ENCODE measurements at regions of chr13 and their contacts with region 1.

Region 1: GRCh38 chr13:46160471-46161066 is 21.4 kb downstream of the LCP1 start:
- DNase-seq: peak; percentile 85
- ATAC-seq: peak; percentile 66
- H3K4me3 ChIP-seq: no peak overlapping the region
- H3K4me3 Mint-ChIP-seq: peak overlapping the region; percentile 63
- H3K27ac ChIP-seq: peak overlapping the region; percentile 53 to 88
- H3K27ac Mint-ChIP-seq: peak overlapping the region; percentile 84
- H3K4me1 ChIP-seq: peaks cover 43 to 45% of the 10 kb centered on the region in 2 donors
- H3K4me1 Mint-ChIP-seq: peaks cover 50% of the 10 kb centered on the region
- H3K27me3 ChIP-seq: no peaks in the 10 kb centered on the region
- H3K27me3 Mint-ChIP-seq: no peaks in the 10 kb centered on the region
- CTCF ChIP-seq: peak; percentile 83

Region 2: DNA sequence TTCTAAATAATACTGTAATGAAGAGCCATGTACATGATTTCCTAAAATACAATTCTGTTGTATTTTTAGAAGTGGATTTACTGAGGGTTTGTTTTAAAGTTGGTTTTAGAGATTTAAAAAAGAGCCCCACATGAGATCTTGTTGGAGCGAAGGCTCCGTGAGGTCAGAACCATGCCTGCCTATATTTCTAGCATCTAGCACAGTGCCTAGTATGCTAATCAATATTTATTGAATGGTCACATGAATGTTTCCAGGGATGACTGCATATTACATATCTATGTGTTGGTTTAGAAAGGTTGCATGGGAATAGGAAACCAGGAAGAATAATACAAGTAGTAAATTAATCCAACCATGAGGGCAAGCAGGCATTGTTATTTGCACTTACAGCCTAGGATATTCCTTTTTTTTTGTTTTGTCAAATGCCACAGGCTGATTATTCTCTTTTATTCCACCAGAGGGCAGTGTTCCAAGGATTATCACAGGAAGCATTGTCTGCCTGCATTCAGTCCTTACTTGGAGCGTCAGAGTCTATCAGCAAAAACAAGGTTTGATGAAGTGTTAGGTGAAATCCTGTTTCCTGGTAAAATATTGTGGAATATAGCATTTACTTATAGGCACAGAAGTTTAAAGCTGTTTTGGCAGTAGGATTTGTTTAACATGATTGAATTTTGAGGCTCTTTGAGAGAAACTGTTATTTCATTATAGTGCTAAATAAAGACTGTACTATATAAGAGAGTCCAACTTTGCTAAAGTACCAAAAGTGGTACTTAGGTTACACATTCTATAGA is 649.1 kb before region 1 on chr13:
- CTCF ChIA-PET with region 1: no interaction called
- POLR2A ChIA-PET with region 1: interaction called, 13 read pairs
- intact Hi-C with region 1: no loop called
- DNase-seq: peak; percentile 73
- ATAC-seq: peak; percentile 65
- H3K4me3 ChIP-seq: no peak overlapping the region
- H3K4me3 Mint-ChIP-seq: no peak overlapping the region
- H3K27ac ChIP-seq: peak overlapping the region in 1 of 2 donors; percentile 26
- H3K27ac Mint-ChIP-seq: no peak overlapping the region
- H3K4me1 ChIP-seq: peaks cover 0 to 3% of the 10 kb centered on the region in 2 donors
- H3K4me1 Mint-ChIP-seq: peaks cover 8% of the 10 kb centered on the region
- H3K27me3 ChIP-seq: no peaks in the 10 kb centered on the region
- H3K27me3 Mint-ChIP-seq: no peaks in the 10 kb centered on the region
- CTCF ChIP-seq: peak; percentile 95

Region 3: GRCh38 chr13:46140044-46140443 is 20.5 kb before region 1 on chr13:
- CTCF ChIA-PET with region 1: interaction called, 25 read pairs
- POLR2A ChIA-PET with region 1: no interaction called
- intact Hi-C with region 1: no loop called
- DNase-seq: no peak
- ATAC-seq: no peak
- H3K4me3 ChIP-seq: no peak overlapping the region
- H3K4me3 Mint-ChIP-seq: no peak overlapping the region
- H3K27ac ChIP-seq: peak overlapping the region in 1 of 2 donors; percentile 64
- H3K27ac Mint-ChIP-seq: peak overlapping the region; percentile 7
- H3K4me1 ChIP-seq: no peaks in the 10 kb centered on the region
- H3K4me1 Mint-ChIP-seq: no peaks in the 10 kb centered on the region
- H3K27me3 ChIP-seq: no peaks in the 10 kb centered on the region
- H3K27me3 Mint-ChIP-seq: no peaks in the 10 kb centered on the region
- CTCF ChIP-seq: no peak

Region 4: DNA sequence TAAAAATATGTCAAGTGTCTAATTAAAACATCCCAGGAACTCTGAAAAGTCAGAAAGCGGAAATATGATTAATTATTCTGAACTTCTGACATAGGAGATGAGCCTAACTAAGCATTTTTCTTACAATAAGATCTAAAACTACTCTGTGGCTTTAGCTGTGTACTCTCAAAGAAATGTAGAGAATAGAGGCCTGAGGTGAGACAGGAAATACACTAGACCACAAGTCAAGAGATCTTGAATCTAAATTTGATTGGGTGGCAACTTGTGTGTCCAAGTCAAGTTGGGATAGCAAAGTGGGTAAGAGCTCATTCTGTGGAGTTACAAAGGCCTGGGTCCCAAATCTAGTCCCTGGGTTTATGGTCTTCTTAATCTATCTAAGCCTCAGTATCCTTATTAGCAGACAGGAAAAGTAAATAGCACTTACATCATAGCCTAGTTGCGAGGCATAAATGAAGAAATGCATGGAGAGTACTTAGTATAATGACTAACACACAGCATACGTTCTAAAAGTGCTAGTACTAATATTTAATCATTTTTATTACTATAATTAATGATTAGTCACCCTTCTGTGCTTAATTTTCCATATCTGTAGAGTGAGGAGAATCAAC is 41.7 kb after region 1 on chr13:
- CTCF ChIA-PET with region 1: interaction called, 12 read pairs
- POLR2A ChIA-PET with region 1: no interaction called
- intact Hi-C with region 1: no loop called
- DNase-seq: no peak
- ATAC-seq: no peak
- H3K4me3 ChIP-seq: no peak overlapping the region
- H3K4me3 Mint-ChIP-seq: no peak overlapping the region
- H3K27ac ChIP-seq: peak overlapping the region in 1 of 2 donors; percentile 52
- H3K27ac Mint-ChIP-seq: no peak overlapping the region
- H3K4me1 ChIP-seq: peaks cover 19 to 23% of the 10 kb centered on the region in 2 donors
- H3K4me1 Mint-ChIP-seq: peaks cover 27% of the 10 kb centered on the region
- H3K27me3 ChIP-seq: no peaks in the 10 kb centered on the region
- H3K27me3 Mint-ChIP-seq: no peaks in the 10 kb centered on the region
- CTCF ChIP-seq: no peak

Region 5: GRCh38 chr13:46288570-46289259 is 128.1 kb after region 1 on chr13:
- CTCF ChIA-PET with region 1: interaction called, 21 read pairs
- POLR2A ChIA-PET with region 1: no interaction called
- intact Hi-C with region 1: loop called (anchors 1 kb)
- DNase-seq: peak; percentile 65
- ATAC-seq: peak; percentile 24
- H3K4me3 ChIP-seq: no peak overlapping the region
- H3K4me3 Mint-ChIP-seq: no peak overlapping the region
- H3K27ac ChIP-seq: no peak overlapping the region
- H3K27ac Mint-ChIP-seq: no peak overlapping the region
- H3K4me1 ChIP-seq: no peaks in the 10 kb centered on the region
- H3K4me1 Mint-ChIP-seq: no peaks in the 10 kb centered on the region
- H3K27me3 ChIP-seq: no peaks in the 10 kb centered on the region
- H3K27me3 Mint-ChIP-seq: no peaks in the 10 kb centered on the region
- CTCF ChIP-seq: peak; percentile 87

Region 6: GRCh38 chr13:46559272-46559805 is 398.8 kb after region 1 on chr13:
- CTCF ChIA-PET with region 1: no interaction called
- POLR2A ChIA-PET with region 1: no interaction called
- intact Hi-C with region 1: no loop called
- DNase-seq: no peak
- ATAC-seq: no peak
- H3K4me3 ChIP-seq: no peak overlapping the region
- H3K4me3 Mint-ChIP-seq: no peak overlapping the region
- H3K27ac ChIP-seq: peak overlapping the region in 1 of 2 donors; percentile 40
- H3K27ac Mint-ChIP-seq: no peak overlapping the region
- H3K4me1 ChIP-seq: peaks cover 46 to 58% of the 10 kb centered on the region in 2 donors
- H3K4me1 Mint-ChIP-seq: peaks cover 40% of the 10 kb centered on the region
- H3K27me3 ChIP-seq: no peaks in the 10 kb centered on the region
- H3K27me3 Mint-ChIP-seq: no peaks in the 10 kb centered on the region
- CTCF ChIP-seq: no peak